Panc1 (cell line): ENCODE measurements at regions of chr4 and their contacts with region 1.

Region 1: DNA sequence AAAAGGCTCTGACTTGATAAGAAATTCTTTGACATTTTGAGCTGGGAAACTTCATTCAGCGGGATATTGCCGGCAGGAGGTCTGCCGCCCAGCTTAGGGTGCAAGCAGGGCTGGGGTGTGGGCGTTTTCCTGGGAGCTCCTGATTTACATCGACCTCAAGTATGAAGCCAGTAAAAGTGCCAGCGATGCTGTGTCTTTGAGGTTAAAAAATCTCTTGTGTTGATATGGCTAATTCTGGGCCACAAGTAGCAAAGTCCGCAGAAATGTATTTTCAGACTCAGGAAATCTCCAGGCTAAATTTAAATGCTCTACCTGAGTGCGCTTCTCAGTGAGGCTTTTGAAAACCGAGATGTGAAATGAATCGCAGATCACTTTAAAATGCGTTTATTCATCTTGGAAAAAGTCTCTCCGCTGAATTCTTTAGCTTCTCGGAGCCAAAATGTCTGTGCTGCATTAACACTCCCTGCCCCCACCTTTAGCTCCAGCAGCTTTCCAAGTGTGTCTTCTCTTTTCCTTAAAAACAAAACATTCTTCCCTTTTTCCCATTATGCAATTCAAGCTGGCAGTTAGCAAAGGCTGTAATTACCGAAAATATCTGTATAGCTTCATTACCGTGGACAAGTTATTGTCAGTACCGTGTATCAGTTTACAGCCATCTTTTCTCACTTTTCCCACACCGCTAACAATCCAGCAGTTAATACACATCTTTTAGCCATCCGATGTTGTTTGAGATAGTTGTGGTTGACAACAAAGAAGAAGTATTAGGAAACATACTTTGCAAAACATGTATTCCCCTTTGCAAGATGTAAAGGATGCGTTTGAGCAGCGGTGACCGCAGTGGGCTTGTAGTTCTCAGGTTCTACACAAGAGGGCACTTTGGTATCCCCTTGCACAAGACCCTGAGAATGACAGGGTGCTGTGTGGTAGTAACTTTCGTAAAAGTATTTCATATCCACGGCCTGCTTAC is 136.0 kb upstream of the STX18 start:
- DNase-seq: no peak
- ATAC-seq: no peak
- H3K4me3 ChIP-seq: no peak overlapping the region
- H3K27ac ChIP-seq: no peak overlapping the region
- H3K4me1 ChIP-seq: no peaks in the 10 kb centered on the region
- H3K27me3 ChIP-seq: no peaks in the 10 kb centered on the region
- CTCF ChIP-seq: peak; percentile 66

Region 2: GRCh38 chr4:4791299-4792111 is 113.7 kb after region 1 on chr4:
- CTCF ChIA-PET with region 1: no interaction called
- POLR2A ChIA-PET with region 1: interaction called, 12 read pairs
- in situ Hi-C with region 1: no loop called
- intact Hi-C with region 1: no loop called
- DNase-seq: no peak
- ATAC-seq: no peak
- H3K4me3 ChIP-seq: no peak overlapping the region
- H3K27ac ChIP-seq: no peak overlapping the region
- H3K4me1 ChIP-seq: no peaks in the 10 kb centered on the region
- H3K27me3 ChIP-seq: peaks cover 2% of the 10 kb centered on the region; the same call in 1 of the 2 replicates
- CTCF ChIP-seq: no peak

Region 3: DNA sequence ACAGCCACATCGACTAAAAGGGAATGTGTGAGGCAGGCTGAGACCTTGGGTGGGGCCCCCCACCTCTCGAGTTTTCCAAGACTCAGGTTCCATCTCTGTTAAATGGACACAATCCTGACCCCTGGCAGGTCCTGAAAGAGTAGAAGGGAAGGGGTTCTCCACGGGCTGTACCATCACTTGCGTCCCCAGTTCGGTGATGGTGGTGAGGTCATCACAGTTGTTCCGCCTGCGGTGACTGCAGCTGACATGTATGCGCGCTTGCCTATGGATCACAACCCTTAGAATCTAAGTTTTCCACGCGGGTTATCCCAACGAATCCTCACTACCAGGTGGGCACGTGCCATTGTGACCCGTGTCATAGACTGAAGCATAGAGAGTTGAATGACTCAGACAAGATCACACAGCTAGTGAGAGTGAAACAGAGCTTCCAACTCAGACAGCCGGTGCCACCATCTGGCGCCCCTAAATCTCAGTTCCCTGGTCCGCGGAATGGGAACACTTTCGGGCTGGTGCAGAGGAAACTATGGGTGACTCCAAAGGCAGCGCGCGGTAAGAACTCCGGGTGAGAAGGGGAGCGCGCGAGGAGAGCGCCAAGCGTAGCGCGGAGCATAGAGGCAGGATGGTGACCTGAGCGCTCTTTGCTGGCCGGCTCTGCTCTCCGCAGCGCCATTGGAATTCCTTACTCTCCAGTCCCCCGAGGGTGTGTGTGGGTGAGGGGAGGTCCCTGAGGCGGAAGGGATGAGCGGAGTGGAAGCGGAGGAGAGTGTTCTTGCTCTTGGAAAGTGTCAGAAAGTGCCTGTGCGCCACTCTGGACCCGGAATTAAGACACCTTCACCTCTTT is 192.1 kb after region 1 on chr4:
- CTCF ChIA-PET with region 1: no interaction called
- POLR2A ChIA-PET with region 1: no interaction called
- in situ Hi-C with region 1: no loop called
- intact Hi-C with region 1: loop called (anchors 10 kb)
- DNase-seq: no peak
- ATAC-seq: 0 out of 2 replicates have a peak, but pooled peaks have one; percentile 27
- H3K4me3 ChIP-seq: no peak overlapping the region
- H3K27ac ChIP-seq: no peak overlapping the region
- H3K4me1 ChIP-seq: no peaks in the 10 kb centered on the region
- H3K27me3 ChIP-seq: peaks cover 4% of the 10 kb centered on the region; the same call in 1 of the 2 replicates
- CTCF ChIP-seq: no peak